ENCODE measurements at regions of chr11 and their contacts with region 1.

Region 1: GRCh38 chr11:17978553-17979287 is 34.1 kb downstream of the SERGEF start:
- DNase-seq: peak; percentile 48 to 58
- H3K4me3 ChIP-seq: no peak overlapping the region
- H3K27ac ChIP-seq: no peak overlapping the region
- H3K4me1 ChIP-seq: no peaks in the 10 kb centered on the region
- H3K27me3 ChIP-seq: no peaks in the 10 kb centered on the region
- CTCF ChIP-seq: peak; percentile 82

Region 2: DNA sequence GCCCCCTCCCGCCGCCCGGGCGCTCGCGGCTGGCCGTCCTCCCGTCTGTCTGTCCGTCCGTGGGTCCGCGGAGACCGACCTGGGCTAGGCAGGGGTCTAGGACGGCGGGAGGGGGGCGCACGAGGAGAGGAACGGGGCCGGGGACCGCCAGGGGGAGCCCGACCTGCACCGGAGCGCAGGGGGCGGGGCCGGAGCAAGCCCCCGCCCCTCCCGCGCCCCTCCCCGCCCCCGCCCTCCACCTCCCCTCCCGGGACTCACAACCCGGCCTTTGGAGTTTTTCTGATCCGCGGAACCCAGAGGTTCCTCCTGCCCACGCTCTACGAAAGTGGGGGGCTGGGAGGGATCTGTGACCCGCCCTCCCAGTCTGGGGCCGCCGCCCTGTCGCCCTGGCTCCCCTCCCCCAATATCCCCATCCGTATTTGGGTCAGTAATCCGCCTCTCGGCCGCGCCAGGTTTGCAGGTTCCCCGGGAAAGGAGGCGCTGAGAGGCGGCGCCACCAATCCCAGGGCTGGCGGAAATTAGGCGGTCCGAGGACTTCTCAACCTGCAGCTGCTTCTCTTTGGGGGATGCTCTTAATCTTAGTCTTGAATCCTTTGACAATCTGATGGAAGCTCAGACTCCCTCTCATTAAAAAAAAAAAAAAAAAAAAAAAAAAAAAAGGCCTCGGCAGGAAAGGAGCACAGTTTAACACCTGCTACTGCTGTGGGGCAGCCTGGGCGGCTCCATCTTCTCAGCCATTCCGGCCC is 589.3 kb before region 1 on chr11:
- CTCF ChIA-PET with region 1: no interaction called
- POLR2A ChIA-PET with region 1: no interaction called
- intact Hi-C with region 1: loop called (anchors 5 kb)
- DNase-seq: peak; percentile 53 to 64
- H3K4me3 ChIP-seq: peak overlapping the region; percentile 82
- H3K27ac ChIP-seq: no peak overlapping the region
- H3K4me1 ChIP-seq: no peaks in the 10 kb centered on the region
- H3K27me3 ChIP-seq: peaks cover 8% of the 10 kb centered on the region
- CTCF ChIP-seq: peak; percentile 64

Region 3: DNA sequence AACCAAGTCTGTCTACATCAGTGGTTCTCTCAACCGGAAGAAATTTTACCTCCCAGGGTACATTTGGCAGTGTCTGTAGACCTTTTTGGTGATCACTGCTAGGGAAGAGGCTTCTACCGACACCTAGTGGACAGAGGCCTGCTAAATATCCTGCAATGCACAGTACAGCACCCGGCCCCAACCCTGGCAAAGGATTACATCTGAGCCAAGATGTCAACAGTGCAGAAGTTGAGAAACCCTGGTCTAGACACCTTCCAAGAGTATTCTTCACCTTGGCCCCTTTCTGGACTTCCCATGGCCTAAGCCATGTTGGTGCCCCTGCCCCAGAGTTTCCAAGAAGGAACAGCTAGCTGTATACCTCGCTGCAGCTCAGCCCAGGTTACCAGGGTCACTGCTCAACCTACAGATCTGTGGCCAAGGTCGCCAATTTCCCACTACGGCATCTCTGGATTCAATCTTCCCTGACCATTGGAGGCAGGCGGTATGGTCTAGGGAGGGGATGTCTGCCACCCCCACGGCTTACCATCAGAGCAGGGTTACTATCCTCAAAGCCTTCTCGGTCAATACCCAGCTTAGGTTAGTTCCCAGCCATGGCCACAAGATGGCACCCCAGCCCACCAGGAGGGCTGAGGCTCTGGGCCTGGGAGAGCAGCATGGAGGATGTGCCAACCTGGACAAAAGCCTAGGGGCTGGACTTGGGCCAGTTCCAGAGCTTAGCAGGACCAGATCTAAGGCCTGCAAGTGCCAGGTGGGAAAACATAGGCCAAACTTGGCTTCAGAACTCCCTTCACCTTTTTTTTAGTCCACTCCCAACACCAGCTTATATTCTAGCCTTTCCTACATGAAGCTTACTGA is 247.9 kb before region 1 on chr11:
- CTCF ChIA-PET with region 1: interaction called, 26 read pairs
- POLR2A ChIA-PET with region 1: no interaction called
- intact Hi-C with region 1: loop called (anchors 1 kb)
- DNase-seq: peak; percentile 56 to 81
- H3K4me3 ChIP-seq: no peak overlapping the region
- H3K27ac ChIP-seq: no peak overlapping the region
- H3K4me1 ChIP-seq: no peaks in the 10 kb centered on the region
- H3K27me3 ChIP-seq: peaks cover 27% of the 10 kb centered on the region
- CTCF ChIP-seq: peak; percentile 89

Region 4: GRCh38 chr11:17846852-17847453 is 131.8 kb before region 1 on chr11:
- CTCF ChIA-PET with region 1: no interaction called
- POLR2A ChIA-PET with region 1: interaction called, 10 read pairs
- intact Hi-C with region 1: no loop called
- DNase-seq: peak in 1 of 2 experiments; percentile 47
- H3K4me3 ChIP-seq: no peak overlapping the region
- H3K27ac ChIP-seq: no peak overlapping the region
- H3K4me1 ChIP-seq: peaks cover 19% of the 10 kb centered on the region
- H3K27me3 ChIP-seq: no peaks in the 10 kb centered on the region
- CTCF ChIP-seq: peak; percentile 43; the same call in 1 of the 2 replicates

Region 5: DNA sequence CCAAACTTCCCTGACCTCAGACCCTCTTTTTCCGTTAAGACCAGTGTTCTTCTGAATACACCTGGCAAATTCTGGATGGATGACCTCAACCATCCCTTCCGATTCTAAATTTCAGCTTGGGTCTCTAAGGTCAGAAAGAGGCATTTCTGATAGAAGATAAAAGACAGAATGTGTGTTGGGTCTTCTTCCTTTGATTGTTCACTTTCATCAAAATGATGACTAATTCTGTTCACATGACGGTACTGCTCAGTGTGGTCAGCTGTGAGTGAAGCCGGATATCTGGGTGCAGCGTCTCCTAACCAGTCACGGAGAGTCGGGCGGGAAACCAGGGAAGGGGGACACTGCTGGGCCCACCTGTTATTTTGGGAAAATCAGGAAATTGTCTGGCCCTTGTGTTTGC is 1582.3 kb after region 1 on chr11:
- CTCF ChIA-PET with region 1: no interaction called
- POLR2A ChIA-PET with region 1: no interaction called
- intact Hi-C with region 1: loop called (anchors 2 kb)
- DNase-seq: peak in 1 of 2 experiments; percentile 12
- H3K4me3 ChIP-seq: no peak overlapping the region
- H3K27ac ChIP-seq: no peak overlapping the region
- H3K4me1 ChIP-seq: no peaks in the 10 kb centered on the region
- H3K27me3 ChIP-seq: no peaks in the 10 kb centered on the region
- CTCF ChIP-seq: no peak